ENCODE measurements at regions of chr14 and their contacts with region 1.

Region 1: DNA sequence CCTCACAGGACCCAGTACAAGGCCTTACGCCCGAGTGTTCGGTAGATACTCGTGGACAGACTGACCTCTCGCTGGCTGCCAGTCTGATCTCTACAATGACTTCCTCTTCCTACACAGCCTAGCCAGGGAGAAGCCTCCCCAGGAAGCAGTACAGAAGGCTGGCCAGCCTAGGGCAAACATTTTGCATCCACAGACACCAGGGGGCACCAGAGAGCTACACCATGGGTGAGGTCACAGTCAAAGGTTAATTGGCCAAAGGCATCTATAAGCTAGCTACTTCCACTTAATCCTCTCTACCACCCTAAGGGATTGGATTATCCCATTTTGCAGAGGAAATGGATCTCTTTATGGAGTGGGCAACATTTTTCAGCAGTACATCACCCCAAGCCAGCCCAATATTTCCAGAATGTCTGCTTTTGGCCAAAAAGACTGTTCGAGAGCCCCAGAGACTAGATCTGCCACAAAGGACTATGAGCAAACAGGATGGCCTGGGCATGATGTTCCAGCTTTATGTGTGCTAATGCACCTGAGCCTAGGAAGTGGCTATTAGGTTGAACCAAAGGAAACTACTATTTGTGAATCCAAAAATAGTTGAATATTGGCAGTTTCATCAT is 14.6 kb upstream of the PNMA1 start:
- DNase-seq: no peak
- H3K4me3 ChIP-seq: no peak overlapping the region
- CTCF ChIP-seq: peak; percentile 87

Region 2: DNA sequence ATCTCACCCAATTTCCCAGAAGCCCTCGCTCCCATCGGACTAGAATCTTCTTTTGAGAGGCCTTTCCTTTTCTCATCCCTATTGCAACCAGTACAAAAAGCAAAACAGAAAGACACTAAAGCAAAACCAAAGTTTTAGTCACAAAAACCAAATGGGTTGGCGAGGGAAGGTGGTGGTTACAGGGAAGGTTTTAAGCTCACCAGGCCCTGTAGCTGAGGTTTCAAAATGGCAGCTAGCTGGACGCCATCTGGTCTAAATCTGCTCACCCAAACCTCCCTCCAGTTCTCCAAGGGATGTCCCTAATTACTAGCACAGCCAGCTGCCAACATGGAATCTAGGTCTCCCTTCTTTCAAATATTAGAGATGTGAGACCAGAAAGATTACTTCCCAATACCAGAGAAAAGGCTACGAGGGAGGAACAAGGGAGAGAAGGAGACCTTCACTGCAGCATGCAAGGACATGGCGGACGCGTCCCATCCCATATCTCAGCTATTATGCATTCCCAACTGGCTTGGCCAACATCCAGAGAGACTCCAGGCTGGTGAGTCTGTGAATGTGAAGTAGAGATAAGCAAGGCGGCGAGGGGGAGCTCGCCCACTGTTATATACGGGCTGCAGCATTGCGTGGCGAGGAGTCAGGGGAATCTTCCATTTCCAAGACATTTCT is 905.7 kb before region 1 on chr14:
- CTCF ChIA-PET with region 1: no interaction called
- POLR2A ChIA-PET with region 1: no interaction called
- DNase-seq: no peak
- H3K4me3 ChIP-seq: no peak overlapping the region
- CTCF ChIP-seq: no peak

Region 3: DNA sequence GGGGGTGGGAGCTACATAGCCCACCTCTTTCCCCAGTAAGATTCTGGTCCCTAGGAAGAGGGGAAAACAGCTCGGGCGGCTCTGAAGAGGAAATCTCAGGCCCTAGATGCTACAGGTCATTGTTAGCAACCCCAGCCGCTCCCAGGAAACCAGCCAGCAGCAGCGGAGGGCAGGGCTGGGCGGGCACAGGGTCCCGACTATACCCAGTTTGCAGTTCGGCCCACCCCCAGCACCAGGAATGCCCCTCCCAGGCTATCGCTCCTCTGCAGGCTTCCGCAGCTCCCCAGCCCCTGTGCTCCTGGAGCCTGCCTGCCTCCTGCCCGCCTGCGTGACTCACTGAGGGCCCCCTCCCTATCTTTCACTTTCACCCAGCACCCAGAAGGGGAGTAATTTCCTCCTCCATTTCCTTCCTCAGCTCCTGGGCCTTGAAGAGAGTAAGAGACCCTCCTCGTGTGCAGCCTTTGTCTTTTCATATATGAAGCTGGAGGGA is 12.6 kb after region 1 on chr14:
- CTCF ChIA-PET with region 1: interaction called, 170 read pairs
- POLR2A ChIA-PET with region 1: no interaction called
- DNase-seq: no peak
- H3K4me3 ChIP-seq: peak overlapping the region; percentile 36
- CTCF ChIP-seq: no peak

Region 4: GRCh38 chr14:73759714-73760597 is 31.1 kb after region 1 on chr14:
- CTCF ChIA-PET with region 1: interaction called, 35 read pairs
- POLR2A ChIA-PET with region 1: interaction called, 3 read pairs
- DNase-seq: peak; percentile 92
- H3K4me3 ChIP-seq: peak overlapping the region; percentile 89
- CTCF ChIP-seq: no peak

Region 5: DNA sequence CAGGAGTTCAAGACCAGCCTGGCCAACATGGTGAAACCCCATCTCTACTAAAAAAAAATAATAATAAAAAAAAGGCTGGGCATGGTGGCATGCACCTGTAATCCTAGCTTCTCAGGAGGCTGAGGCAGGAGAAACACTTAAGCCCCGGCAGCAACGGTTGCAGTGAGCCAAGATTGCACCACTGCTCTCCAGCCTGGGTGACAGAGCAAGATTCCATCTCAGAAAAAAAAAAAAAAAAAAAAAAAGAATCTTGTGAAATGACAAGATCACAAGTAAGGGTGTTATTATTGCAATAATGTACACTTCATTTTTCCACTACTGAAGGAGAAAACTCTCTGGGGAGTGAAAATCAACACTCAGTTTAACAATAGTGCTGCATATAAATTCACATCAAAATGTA is 114.0 kb after region 1 on chr14:
- CTCF ChIA-PET with region 1: interaction called, 13 read pairs
- POLR2A ChIA-PET with region 1: interaction called, 4 read pairs
- DNase-seq: no peak
- H3K4me3 ChIP-seq: no peak overlapping the region
- CTCF ChIP-seq: no peak

Region 6: GRCh38 chr14:73870525-73871235 is 141.9 kb after region 1 on chr14:
- CTCF ChIA-PET with region 1: interaction called, 17 read pairs
- POLR2A ChIA-PET with region 1: no interaction called
- DNase-seq: no peak
- H3K4me3 ChIP-seq: no peak overlapping the region
- CTCF ChIP-seq: no peak

Region 7: DNA sequence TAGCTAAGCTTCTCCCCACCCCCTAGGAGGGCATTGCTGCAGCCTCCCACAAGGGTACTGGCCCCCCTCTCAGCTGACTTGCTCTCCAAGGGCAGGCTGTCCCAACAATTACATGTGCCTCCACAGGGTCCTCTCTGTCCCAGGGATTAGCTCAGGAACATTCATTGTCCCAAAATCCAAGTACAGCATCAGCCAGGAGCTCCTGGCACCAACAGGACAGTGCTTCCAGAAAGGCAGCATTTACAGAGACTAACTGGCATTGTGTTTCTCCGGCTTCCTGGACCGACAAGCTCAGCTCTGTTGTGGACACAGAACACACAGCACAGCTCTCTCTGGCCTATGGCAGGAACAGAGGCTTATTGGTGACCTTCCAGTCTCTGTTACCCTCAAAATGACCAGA is 552.2 kb after region 1 on chr14:
- CTCF ChIA-PET with region 1: no interaction called
- POLR2A ChIA-PET with region 1: no interaction called
- DNase-seq: no peak
- H3K4me3 ChIP-seq: no peak overlapping the region
- CTCF ChIP-seq: no peak